Activated T-helper 1 cell treated with anti-CD3 and anti-CD28 coated beads, Interleukin-12 subunit alpha, Interleukin-12 subunit beta, Interleukin-2, Interleukin-4 antibody, amounts not matched to agents 30 ng/mL and 10 ng/mL and 1 ng/mL, durations not matched to agents 14 hours and 24 hours and 36 hours (primary cell): ENCODE measurements at regions of chr17 and their contacts with region 1.

Region 1: GRCh38 chr17:66673668-66674315 is 161.1 kb upstream of the CACNG5 start:
- DNase-seq: peak; percentile 44
- H3K4me3 Mint-ChIP-seq: peak overlapping the region; percentile 51
- H3K27ac Mint-ChIP-seq: peak overlapping the region; percentile 84
- H3K4me1 Mint-ChIP-seq: peaks cover 70% of the 10 kb centered on the region
- H3K27me3 Mint-ChIP-seq: no peaks in the 10 kb centered on the region

Region 2: GRCh38 chr17:66426397-66427033 is 247.3 kb before region 1 on chr17:
- intact Hi-C with region 1: loop called (anchors 10 kb)
- DNase-seq: peak; percentile 48
- H3K4me3 Mint-ChIP-seq: peak overlapping the region; percentile 23
- H3K27ac Mint-ChIP-seq: peak overlapping the region; percentile 66
- H3K4me1 Mint-ChIP-seq: peaks cover 65% of the 10 kb centered on the region
- H3K27me3 Mint-ChIP-seq: no peaks in the 10 kb centered on the region

Region 3: GRCh38 chr17:66514227-66514806 is 159.5 kb before region 1 on chr17:
- intact Hi-C with region 1: loop called (anchors 2 kb)
- DNase-seq: no peak
- H3K4me3 Mint-ChIP-seq: no peak overlapping the region
- H3K27ac Mint-ChIP-seq: peak overlapping the region; percentile 79
- H3K4me1 Mint-ChIP-seq: peaks cover 86% of the 10 kb centered on the region
- H3K27me3 Mint-ChIP-seq: no peaks in the 10 kb centered on the region

Region 4: GRCh38 chr17:66567234-66568170 is 106.3 kb before region 1 on chr17:
- intact Hi-C with region 1: loop called (anchors 5 kb)
- DNase-seq: peak; percentile 63
- H3K4me3 Mint-ChIP-seq: no peak overlapping the region
- H3K27ac Mint-ChIP-seq: peak overlapping the region; percentile 25
- H3K4me1 Mint-ChIP-seq: peaks cover 37% of the 10 kb centered on the region
- H3K27me3 Mint-ChIP-seq: no peaks in the 10 kb centered on the region

Region 5: GRCh38 chr17:66655861-66656260 is 17.9 kb before region 1 on chr17:
- intact Hi-C with region 1: loop called (anchors 1 kb)
- DNase-seq: no peak
- H3K4me3 Mint-ChIP-seq: peak overlapping the region; percentile 46
- H3K27ac Mint-ChIP-seq: peak overlapping the region; percentile 81
- H3K4me1 Mint-ChIP-seq: peaks cover 55% of the 10 kb centered on the region
- H3K27me3 Mint-ChIP-seq: no peaks in the 10 kb centered on the region

Region 6: DNA sequence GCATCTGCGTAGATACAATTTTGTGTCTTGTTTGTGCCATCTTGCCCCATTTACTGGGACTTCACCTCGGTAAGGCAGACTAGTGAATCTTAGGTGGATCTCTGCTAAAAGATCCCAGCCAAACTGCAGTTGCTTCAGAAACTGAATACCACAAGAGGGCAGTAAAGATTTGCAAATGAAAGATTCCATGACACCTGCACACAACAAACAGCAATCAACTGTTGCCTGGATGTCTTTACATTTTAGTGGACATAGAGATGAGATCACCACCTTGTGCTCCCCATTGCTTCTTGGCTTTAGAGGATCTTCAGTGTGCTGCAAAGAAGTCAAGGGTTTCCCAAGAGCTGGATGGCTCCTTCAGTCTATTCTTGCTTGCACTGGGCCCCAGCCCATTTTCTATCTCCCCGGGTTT is 42.0 kb after region 1 on chr17:
- intact Hi-C with region 1: loop called (anchors 2 kb)
- DNase-seq: no peak
- H3K4me3 Mint-ChIP-seq: no peak overlapping the region
- H3K27ac Mint-ChIP-seq: peak overlapping the region; percentile 72
- H3K4me1 Mint-ChIP-seq: peaks cover 54% of the 10 kb centered on the region
- H3K27me3 Mint-ChIP-seq: no peaks in the 10 kb centered on the region

Region 7: DNA sequence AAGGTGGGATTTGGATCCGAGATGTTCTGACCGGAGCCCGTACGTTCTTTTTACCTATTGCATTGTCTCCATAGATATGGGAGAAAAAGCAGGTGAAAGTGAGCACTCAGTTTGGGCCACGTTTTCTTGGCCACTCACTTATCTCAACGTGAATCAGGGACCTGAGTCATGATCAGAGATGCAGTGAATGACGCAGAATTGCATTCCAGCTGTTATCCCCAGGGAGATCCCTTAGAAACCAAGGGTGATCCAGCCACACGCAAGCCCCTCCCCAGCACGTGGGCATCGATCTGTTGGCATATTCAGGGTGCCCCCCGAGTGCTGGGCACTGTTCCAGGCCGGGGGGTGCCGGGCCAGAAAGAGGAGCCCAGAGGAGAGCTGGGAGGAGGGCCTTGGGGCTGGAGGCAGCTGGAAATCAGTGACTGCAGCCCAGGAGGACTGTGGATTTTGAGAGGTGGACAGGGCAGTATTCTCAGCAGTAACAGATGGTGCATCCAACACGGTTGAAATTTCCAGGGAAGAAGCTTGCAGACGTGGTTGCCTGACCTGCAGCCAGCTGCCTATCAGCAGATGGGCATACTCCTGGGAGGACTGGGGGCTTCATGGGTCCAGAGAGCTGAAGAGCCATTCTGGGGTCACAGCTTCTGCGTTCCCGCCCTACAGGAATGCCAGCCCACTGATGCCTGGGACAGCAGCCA is 73.9 kb after region 1 on chr17:
- intact Hi-C with region 1: no loop called
- DNase-seq: no peak
- H3K4me3 Mint-ChIP-seq: no peak overlapping the region
- H3K27ac Mint-ChIP-seq: no peak overlapping the region
- H3K4me1 Mint-ChIP-seq: no peaks in the 10 kb centered on the region
- H3K27me3 Mint-ChIP-seq: no peaks in the 10 kb centered on the region